ENCODE measurements at regions of chr4 and their contacts with region 1.

Region 1: DNA sequence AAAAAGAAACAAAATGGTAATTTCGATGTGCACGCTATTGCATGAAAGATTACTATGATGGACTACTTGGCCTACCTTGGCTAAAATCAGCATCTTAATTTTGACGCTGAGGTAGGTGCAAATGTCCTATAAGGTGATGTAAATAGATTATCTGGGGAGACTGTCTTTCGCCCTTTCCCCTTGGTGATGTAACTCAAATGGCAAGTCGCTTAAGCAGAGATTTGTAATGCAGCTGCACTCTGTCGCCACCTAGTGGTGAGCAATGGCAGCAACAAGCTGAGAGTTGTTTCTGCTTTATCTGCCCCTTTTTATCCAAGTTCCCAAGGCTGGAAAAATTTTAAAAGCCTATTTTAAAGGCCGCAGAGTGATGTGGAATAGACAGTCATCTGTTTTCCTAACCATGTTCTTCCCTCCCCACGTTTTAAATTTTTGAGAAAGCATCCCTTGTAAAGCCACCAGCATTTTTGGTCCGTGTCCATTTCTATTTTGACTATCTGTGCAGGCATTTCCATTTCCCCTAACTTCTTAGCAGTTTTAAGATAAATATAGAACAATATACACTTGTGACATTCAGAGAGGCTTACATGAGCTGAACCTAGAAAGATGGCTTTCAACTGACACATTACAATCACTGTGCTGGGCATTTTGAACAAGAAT is 62.4 kb upstream of the PDLIM3 start:
- DNase-seq: peak; percentile 86
- ATAC-seq: peak; percentile 57
- H3K4me3 Mint-ChIP-seq: no peak overlapping the region
- H3K27ac Mint-ChIP-seq: no peak overlapping the region
- H3K4me1 Mint-ChIP-seq: peaks cover 3% of the 10 kb centered on the region
- H3K27me3 Mint-ChIP-seq: peaks cover 18% of the 10 kb centered on the region

Region 2: DNA sequence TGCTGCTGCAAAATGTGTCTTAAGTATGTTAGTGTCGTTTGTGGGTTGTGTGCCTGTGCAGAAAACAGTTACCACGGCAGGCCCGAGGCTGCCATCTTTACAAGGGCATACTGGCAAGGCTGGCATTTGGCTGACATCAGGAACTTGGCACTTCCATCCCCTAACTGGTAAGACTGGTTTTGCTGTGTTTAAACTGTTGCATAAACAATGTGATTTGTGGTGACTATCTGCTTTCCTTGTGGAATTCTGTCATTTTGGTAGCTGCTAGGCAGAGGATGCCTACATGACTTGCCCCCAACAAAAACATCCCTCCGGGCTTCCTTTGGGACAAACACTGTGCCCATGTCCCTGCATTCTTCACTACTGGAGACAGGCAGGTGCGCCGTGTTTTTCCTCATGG is 214.2 kb before region 1 on chr4:
- CTCF ChIA-PET with region 1: no interaction called
- POLR2A ChIA-PET with region 1: no interaction called
- intact Hi-C with region 1: no loop called
- DNase-seq: no peak
- ATAC-seq: no peak
- H3K4me3 Mint-ChIP-seq: no peak overlapping the region
- H3K27ac Mint-ChIP-seq: no peak overlapping the region
- H3K4me1 Mint-ChIP-seq: peaks cover 11% of the 10 kb centered on the region
- H3K27me3 Mint-ChIP-seq: peaks cover 3% of the 10 kb centered on the region

Region 3: GRCh38 chr4:185534866-185535611 is 62.6 kb before region 1 on chr4 and contains the start of gene PDLIM3:
- CTCF ChIA-PET with region 1: interaction called, 4 read pairs
- POLR2A ChIA-PET with region 1: no interaction called
- intact Hi-C with region 1: loop called in 1 of 2 experiments (anchors 2 kb)
- DNase-seq: peak; percentile 34
- ATAC-seq: peak; percentile 70
- H3K4me3 Mint-ChIP-seq: peak within 1 kb of the TSS; percentile 42
- H3K27ac Mint-ChIP-seq: no peak within 1 kb of the TSS
- H3K4me1 Mint-ChIP-seq: peaks cover 3% of the 10 kb centered on the region
- H3K27me3 Mint-ChIP-seq: peaks cover 30% of the 10 kb centered on the region
- total RNA-seq, gene PDLIM3: not detected

Region 4: GRCh38 chr4:185587427-185588161 is 10.1 kb before region 1 on chr4:
- CTCF ChIA-PET with region 1: interaction called, 33 read pairs
- POLR2A ChIA-PET with region 1: interaction called, 4 read pairs
- intact Hi-C with region 1: no loop called
- DNase-seq: peak; percentile 90
- ATAC-seq: peak; percentile 99
- H3K4me3 Mint-ChIP-seq: peak overlapping the region; percentile 40
- H3K27ac Mint-ChIP-seq: peak overlapping the region; percentile 63
- H3K4me1 Mint-ChIP-seq: peaks cover 18% of the 10 kb centered on the region
- H3K27me3 Mint-ChIP-seq: peaks cover 47% of the 10 kb centered on the region

Region 5: DNA sequence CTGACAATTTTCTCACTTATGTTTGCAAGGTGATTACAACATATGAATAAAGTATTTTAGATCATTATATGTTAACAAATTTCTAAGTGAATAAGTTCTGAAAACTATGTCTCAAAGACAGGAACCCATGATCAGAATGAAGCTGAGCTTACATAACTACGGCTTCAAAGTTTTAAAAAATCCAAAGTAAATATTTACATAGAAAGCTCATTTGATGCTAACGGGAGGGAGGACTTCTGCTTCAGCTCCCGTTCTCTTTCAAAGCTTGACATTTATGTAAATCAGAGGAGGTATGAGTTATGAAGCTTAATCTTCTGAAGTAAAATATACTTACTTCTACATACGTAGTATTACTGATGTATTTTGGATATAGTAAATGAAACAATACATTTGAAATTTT is 10.5 kb after region 1 on chr4:
- CTCF ChIA-PET with region 1: interaction called, 20 read pairs
- POLR2A ChIA-PET with region 1: no interaction called
- intact Hi-C with region 1: no loop called
- DNase-seq: no peak
- ATAC-seq: no peak
- H3K4me3 Mint-ChIP-seq: no peak overlapping the region
- H3K27ac Mint-ChIP-seq: no peak overlapping the region
- H3K4me1 Mint-ChIP-seq: peaks cover 3% of the 10 kb centered on the region
- H3K27me3 Mint-ChIP-seq: peaks cover 3% of the 10 kb centered on the region

Region 6: DNA sequence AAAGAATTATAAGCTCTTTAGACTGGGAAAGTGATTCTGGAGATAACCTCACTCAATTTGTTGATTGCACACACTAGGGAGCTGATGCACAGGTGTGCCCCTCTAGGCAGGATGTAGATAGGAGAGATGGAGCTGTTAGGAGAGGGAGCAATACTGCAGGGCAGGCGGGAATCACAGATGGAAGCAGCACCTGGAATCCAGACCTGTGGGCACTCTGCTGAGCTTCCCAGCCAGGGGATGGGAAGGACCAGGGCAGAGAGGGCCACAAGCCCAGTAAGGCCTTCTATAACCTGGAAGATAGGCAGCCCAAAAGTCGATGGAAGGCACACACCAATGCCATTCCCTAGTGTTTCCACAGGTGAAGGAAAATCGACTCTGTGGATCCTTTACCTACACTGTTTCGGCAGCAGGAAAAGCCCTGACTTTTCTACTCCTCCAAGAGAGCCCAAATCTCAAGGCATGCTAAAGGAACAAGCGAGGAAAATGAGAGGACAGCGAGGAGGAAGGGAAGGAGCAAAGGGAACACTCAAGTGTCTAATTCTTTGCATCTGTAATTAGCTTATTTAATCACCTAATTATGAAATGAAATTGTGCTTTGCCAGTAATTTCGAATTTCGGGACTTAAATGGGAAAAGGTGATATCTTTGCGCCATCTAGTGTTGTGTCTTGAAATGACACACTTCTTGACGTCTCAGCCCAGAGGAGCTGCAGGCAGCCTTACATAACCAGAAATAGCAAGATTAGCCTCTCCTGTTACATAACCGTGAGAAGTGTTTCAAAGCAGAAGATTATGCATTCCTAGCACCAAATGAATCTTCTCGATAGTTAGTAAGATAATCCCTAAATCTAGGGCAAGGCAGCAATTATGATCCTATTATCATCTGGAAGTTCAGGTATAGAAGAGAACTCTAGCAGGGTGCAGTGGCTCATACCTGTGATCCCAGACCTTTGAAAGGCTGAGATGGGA is 440.3 kb after region 1 on chr4:
- CTCF ChIA-PET with region 1: no interaction called
- POLR2A ChIA-PET with region 1: no interaction called
- intact Hi-C with region 1: loop called in 1 of 2 experiments (anchors 5 kb)
- DNase-seq: peak; percentile 23
- ATAC-seq: no peak
- H3K4me3 Mint-ChIP-seq: no peak overlapping the region
- H3K27ac Mint-ChIP-seq: no peak overlapping the region
- H3K4me1 Mint-ChIP-seq: no peaks in the 10 kb centered on the region
- H3K27me3 Mint-ChIP-seq: peaks cover 17% of the 10 kb centered on the region

Region 7: GRCh38 chr4:186137196-186137794 is 539.6 kb after region 1 on chr4:
- CTCF ChIA-PET with region 1: no interaction called
- POLR2A ChIA-PET with region 1: no interaction called
- intact Hi-C with region 1: no loop called
- DNase-seq: no peak
- ATAC-seq: no peak
- H3K4me3 Mint-ChIP-seq: no peak overlapping the region
- H3K27ac Mint-ChIP-seq: no peak overlapping the region
- H3K4me1 Mint-ChIP-seq: peaks cover 8% of the 10 kb centered on the region
- H3K27me3 Mint-ChIP-seq: no peaks in the 10 kb centered on the region

Measured in activated CD4-positive, alpha-beta T cell treated with anti-CD3 and anti-CD28 coated beads for 36 hours (primary cell).